H1 (cell line): ENCODE measurements at regions of chr2 and their contacts with region 1.

Region 1: DNA sequence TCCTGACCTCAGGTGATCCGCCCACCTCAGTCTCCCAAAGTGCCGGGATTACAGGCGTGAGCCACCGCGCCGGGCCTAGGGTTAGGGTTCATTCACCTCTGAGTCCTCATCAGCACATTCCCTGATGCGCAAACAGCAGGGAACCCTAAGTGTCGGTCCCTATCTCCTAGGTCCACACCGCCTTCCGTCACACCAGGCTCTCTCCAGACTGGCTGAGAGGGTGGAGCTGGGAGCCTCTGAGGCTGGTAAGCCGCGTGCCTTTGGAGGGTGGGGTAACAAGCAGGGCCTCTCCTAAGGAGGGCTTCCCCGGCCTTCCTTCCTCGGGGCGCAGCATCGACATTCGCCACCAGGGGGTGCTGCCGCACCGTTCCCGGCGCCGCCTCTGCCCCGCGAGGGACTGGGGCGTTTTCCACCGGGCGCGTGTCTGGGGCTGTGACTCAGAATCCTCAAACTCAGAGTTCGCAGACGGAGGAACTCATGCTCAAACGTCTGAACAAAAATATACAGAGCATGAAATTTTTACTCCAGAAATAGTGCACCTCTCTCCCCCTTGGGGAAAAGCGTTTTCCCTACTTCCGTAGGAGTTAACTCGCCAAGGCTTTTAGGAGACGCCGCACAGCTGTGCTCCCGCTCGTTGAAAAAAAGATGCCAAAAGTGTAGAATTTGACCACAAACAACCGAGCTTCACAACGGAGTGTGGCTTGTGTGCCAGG is 63.9 kb upstream of the ASAP2 start:
- DNase-seq: peak; percentile 80 to 99
- H3K4me3 ChIP-seq: peak overlapping the region in 3 of 4 experiments; percentile 14 to 49 (median 29); a peak in 3 of 8 replicates
- H3K27ac ChIP-seq: no peak overlapping the region
- H3K4me1 ChIP-seq: peaks cover 4 to 7% (median 4%) of the 10 kb centered on the region in 4 experiments; a peak in 6 of 7 replicates
- H3K27me3 ChIP-seq: peaks cover 0 to 32% (median 18%) of the 10 kb centered on the region in 4 experiments; a peak in 5 of 7 replicates
- CTCF ChIP-seq: peak in 2 of 3 experiments; percentile 92 to 95; a peak in 3 of 4 replicates
- EP300 ChIP-seq: no peak
- POLR2A ChIP-seq: no peak
- RAD21 ChIP-seq: peak; percentile 97 to 98

Region 2: GRCh38 chr2:8827729-8828128 is 315.0 kb before region 1 on chr2:
- CTCF ChIA-PET with region 1: no interaction called
- POLR2A ChIA-PET with region 1: no interaction called
- DNase-seq: no peak
- H3K4me3 ChIP-seq: no peak overlapping the region
- H3K27ac ChIP-seq: no peak overlapping the region
- H3K4me1 ChIP-seq: peaks cover 0 to 3% (median 1%) of the 10 kb centered on the region in 4 experiments; a peak in 3 of 7 replicates
- H3K27me3 ChIP-seq: no peaks in the 10 kb centered on the region
- CTCF ChIP-seq: no peak
- EP300 ChIP-seq: no peak
- POLR2A ChIP-seq: no peak
- RAD21 ChIP-seq: no peak

Region 3: DNA sequence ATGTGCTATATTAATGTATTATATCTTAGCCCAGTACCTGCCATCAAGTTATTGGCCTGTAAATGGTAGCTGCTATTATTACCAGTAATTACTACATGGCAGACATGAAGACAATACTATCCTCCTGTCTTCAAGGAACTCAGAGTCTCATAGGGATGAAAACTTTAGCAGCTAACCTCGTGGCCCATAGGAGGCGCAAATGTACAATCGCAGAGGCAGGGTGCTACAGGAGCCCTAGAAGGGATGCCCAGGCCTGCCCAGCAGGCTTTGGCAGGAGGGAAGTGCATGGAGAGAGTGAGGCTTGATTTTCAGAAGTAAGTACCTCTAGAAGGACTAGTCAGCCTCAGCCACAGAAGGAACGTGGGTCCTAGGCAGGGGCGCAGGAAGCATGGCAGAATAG is 260.6 kb before region 1 on chr2:
- CTCF ChIA-PET with region 1: interaction called, 13 read pairs
- POLR2A ChIA-PET with region 1: interaction called, 4 read pairs
- DNase-seq: peak; percentile 50 to 79
- H3K4me3 ChIP-seq: no peak overlapping the region
- H3K27ac ChIP-seq: no peak overlapping the region
- H3K4me1 ChIP-seq: no peaks in the 10 kb centered on the region; a peak in 3 of 7 replicates
- H3K27me3 ChIP-seq: no peaks in the 10 kb centered on the region
- CTCF ChIP-seq: peak; percentile 71 to 93 (median 90)
- EP300 ChIP-seq: no peak
- POLR2A ChIP-seq: no peak
- RAD21 ChIP-seq: peak; percentile 92 to 95

Region 4: DNA sequence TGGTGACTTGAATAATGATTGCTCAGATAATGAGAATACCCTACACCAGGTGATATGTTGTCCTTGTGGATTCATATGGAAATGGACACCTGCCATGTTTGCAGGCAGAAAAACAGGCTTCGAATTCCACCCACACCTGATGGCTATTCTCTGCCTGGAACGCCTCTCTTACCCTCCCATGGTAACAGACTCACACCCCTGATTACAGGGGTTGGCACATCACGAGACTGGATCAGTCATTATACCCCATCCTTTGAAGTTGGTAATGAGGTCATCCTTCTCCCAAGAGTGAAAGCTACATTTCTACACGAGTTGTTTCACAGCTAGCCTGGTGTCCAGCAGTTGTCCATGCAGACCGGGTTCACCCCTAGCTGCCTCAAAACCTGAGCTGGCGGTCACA is 67.8 kb before region 1 on chr2:
- CTCF ChIA-PET with region 1: no interaction called
- POLR2A ChIA-PET with region 1: no interaction called
- DNase-seq: peak; percentile 58 to 62
- H3K4me3 ChIP-seq: peak overlapping the region in 1 of 4 experiments; percentile 5; a peak in 1 of 8 replicates
- H3K27ac ChIP-seq: no peak overlapping the region
- H3K4me1 ChIP-seq: peaks cover 3 to 10% (median 7%) of the 10 kb centered on the region in 4 experiments; a peak in 6 of 7 replicates
- H3K27me3 ChIP-seq: peaks cover 0 to 19% (median 10%) of the 10 kb centered on the region in 4 experiments; a peak in 3 of 7 replicates
- CTCF ChIP-seq: no peak
- EP300 ChIP-seq: peak in 1 of 2 experiments; percentile 66; a peak in 1 of 3 replicates
- POLR2A ChIP-seq: no peak; a peak in 1 of 3 replicates
- RAD21 ChIP-seq: no peak

Region 5: GRCh38 chr2:9112079-9112721 is 30.5 kb before region 1 on chr2:
- CTCF ChIA-PET with region 1: interaction called, 86 read pairs
- POLR2A ChIA-PET with region 1: no interaction called
- DNase-seq: no peak
- H3K4me3 ChIP-seq: no peak overlapping the region
- H3K27ac ChIP-seq: no peak overlapping the region
- H3K4me1 ChIP-seq: peaks cover 0 to 5% (median under 1%) of the 10 kb centered on the region in 4 experiments; a peak in 2 of 7 replicates
- H3K27me3 ChIP-seq: no peaks in the 10 kb centered on the region; a peak in 1 of 7 replicates
- CTCF ChIP-seq: no peak
- EP300 ChIP-seq: no peak
- POLR2A ChIP-seq: no peak
- RAD21 ChIP-seq: no peak

Region 6: DNA sequence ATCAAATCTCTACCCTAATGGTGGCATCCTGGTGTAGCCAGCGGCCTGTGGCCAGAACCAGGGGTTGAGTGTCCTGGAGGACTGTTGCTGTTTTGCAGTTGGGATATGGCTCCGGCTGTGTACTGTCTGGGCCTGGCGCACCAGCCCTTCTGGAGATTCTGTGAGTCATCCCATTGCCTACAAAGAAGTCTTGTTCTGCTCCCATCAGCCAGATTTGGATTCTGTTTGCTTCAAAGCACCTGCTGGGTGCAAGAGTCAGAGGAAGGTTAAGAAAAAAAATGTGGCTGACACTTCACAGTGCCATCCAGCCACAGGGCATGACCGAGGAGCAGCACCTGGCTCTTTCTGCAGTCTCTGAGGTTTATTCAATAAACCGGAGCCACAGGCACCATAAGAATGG is 22.9 kb after region 1 on chr2:
- CTCF ChIA-PET with region 1: interaction called, 26 read pairs
- POLR2A ChIA-PET with region 1: no interaction called
- DNase-seq: no peak
- H3K4me3 ChIP-seq: no peak overlapping the region
- H3K27ac ChIP-seq: no peak overlapping the region
- H3K4me1 ChIP-seq: peaks cover 0 to 1% (median 0%) of the 10 kb centered on the region in 4 experiments; a peak in 3 of 7 replicates
- H3K27me3 ChIP-seq: no peaks in the 10 kb centered on the region
- CTCF ChIP-seq: no peak
- EP300 ChIP-seq: no peak
- POLR2A ChIP-seq: no peak
- RAD21 ChIP-seq: no peak

Region 7: DNA sequence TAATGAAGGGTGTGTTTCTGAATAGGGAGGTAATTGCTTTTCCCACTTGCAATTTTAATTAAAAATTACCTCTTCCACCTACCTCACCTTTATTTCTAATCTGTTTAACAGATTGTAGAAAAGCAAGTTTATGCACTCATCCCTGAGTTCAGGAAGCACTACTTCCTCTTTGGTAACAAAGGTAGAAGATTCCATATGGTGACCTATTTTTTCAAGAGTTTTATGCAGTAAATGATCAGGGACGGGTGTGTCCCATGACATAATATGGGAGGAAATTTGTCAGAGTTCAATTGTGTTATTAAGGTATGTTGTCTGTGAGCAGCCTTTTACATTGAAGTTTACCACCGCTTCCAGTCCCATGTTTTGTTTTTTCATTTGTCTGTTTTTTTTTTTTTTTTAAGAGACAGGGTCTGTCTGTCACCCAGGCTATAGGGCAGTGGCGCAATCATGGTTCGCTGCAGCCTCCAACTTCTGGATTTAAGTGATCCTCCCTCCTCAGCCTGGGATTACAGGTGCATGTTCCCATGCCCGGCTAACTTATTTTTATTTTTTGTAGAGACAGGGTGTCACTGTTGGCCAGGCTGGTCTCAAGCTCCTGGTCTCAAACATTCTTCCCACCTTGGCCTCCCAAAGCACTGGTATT is 132.1 kb after region 1 on chr2:
- CTCF ChIA-PET with region 1: interaction called, 12 read pairs
- POLR2A ChIA-PET with region 1: no interaction called
- DNase-seq: no peak
- H3K4me3 ChIP-seq: no peak overlapping the region
- H3K27ac ChIP-seq: no peak overlapping the region
- H3K4me1 ChIP-seq: peaks cover 0 to 8% (median 5%) of the 10 kb centered on the region in 4 experiments; a peak in 3 of 7 replicates
- H3K27me3 ChIP-seq: no peaks in the 10 kb centered on the region
- CTCF ChIP-seq: no peak
- EP300 ChIP-seq: no peak
- POLR2A ChIP-seq: no peak
- RAD21 ChIP-seq: no peak

Region 8: GRCh38 chr2:9356292-9356691 is 213.6 kb after region 1 on chr2:
- CTCF ChIA-PET with region 1: interaction called, 19 read pairs
- POLR2A ChIA-PET with region 1: no interaction called
- DNase-seq: no peak
- H3K4me3 ChIP-seq: no peak overlapping the region
- H3K27ac ChIP-seq: no peak overlapping the region
- H3K4me1 ChIP-seq: peaks cover 2 to 14% (median 7%) of the 10 kb centered on the region in 4 experiments; a peak in 6 of 7 replicates
- H3K27me3 ChIP-seq: no peaks in the 10 kb centered on the region
- CTCF ChIP-seq: no peak
- EP300 ChIP-seq: no peak
- POLR2A ChIP-seq: no peak
- RAD21 ChIP-seq: no peak

Region 9: DNA sequence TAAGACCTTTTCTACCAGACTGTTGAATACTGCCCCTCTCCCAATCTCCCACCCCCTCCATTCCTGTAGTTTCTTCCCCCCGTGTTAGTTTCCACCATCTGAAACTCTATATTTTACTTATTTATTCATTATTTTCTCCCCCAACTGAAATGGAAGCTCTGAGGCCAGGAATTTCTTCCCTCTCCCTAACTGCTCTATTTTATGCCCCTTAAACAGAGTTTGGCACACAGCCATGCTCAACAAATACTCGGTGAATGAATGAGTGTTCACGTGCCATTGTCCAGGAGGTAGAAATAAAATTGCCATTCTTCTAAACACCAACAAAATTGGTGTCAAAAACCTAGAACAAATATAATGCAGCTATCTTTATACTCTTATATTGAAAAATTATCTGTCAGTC is 275.0 kb after region 1 on chr2:
- CTCF ChIA-PET with region 1: interaction called, 11 read pairs
- POLR2A ChIA-PET with region 1: interaction called, 3 read pairs
- DNase-seq: no peak
- H3K4me3 ChIP-seq: no peak overlapping the region
- H3K27ac ChIP-seq: no peak overlapping the region
- H3K4me1 ChIP-seq: peaks cover 0 to 7% (median 5%) of the 10 kb centered on the region in 4 experiments; a peak in 4 of 7 replicates
- H3K27me3 ChIP-seq: peaks cover 0 to 9% (median 4%) of the 10 kb centered on the region in 4 experiments; a peak in 4 of 7 replicates
- CTCF ChIP-seq: no peak
- EP300 ChIP-seq: no peak
- POLR2A ChIP-seq: no peak
- RAD21 ChIP-seq: no peak

Region 10: DNA sequence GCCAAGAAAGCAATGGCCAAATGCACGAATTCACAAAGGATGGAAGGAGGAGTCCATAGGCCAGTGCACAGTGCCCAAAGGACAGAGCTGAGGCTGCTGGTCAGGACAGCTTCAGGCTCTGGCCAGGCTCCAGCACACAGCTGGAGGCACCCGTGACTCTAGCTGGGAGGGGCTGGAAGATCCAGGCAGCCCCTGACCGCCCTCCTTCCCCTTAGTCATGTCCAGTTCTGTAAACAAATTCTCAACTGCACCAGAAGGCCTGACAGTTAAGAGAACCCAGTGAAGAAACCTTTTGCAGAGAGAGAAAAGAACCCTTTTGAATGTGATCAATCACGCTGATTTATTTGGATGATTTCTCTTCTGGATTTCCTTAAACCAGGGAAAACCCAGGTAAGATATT is 495.8 kb after region 1 on chr2:
- CTCF ChIA-PET with region 1: no interaction called
- POLR2A ChIA-PET with region 1: no interaction called
- DNase-seq: no peak
- H3K4me3 ChIP-seq: no peak overlapping the region
- H3K27ac ChIP-seq: no peak overlapping the region
- H3K4me1 ChIP-seq: peaks cover 0 to 4% (median 0%) of the 10 kb centered on the region in 4 experiments; a peak in 2 of 7 replicates
- H3K27me3 ChIP-seq: 0 out of 7 replicates have a peak, but pooled peaks cover 0 to 2% (median 0%) of the 10 kb centered on the region in 4 experiments
- CTCF ChIP-seq: no peak
- EP300 ChIP-seq: no peak
- POLR2A ChIP-seq: no peak
- RAD21 ChIP-seq: no peak